ENCODE measurements at regions of chr3 and their contacts with region 1.

Region 1: DNA sequence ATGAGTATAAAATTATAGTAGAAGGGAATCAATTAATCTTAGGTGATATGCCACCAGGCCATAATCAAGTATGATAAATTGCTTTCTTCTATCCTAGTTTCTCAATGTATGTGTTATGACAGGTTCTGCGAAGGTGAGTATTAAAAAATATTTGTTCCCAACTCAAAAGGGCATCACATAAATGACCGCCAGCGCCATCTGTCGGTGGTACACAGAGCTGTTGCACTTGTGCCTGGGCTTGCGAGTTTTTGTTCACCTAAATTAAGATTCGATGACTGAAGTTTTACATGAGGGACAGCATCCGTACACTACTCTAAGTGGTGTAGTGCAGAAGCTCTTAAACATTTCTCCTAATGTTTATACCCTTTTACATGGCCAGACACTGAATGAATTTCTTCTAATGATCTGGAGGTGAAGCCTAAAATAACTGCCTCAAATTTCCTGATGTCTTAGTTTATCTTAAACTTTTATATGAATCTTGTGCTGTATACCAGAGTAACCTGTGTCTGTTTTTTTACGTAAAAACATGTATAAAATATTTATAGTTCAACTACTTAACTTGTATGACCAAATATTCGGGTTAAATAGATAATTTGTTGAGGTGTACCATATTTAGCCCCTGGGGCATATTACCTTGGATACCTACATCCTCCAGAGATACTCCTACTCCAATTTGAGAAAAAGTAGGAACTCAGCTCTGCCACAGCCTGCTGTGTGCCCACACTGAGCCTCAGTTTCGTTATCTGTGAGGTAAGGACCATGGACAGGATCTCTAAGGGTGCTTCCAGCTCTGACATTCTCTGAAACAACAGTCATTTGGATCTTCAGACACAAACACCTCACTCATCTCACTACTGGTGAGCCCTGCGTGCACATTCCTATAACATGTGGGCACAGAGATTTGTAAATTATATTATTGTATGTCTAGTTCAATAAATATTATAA is 365.6 kb downstream of the MAGI1 start:
- DNase-seq: peak; percentile 64
- ATAC-seq: peak in 1 of 2 donors; percentile 22

Region 2: GRCh38 chr3:64766440-64766839 is 906.7 kb before region 1 on chr3:
- intact Hi-C with region 1: no loop called
- DNase-seq: no peak
- ATAC-seq: no peak

Region 3: DNA sequence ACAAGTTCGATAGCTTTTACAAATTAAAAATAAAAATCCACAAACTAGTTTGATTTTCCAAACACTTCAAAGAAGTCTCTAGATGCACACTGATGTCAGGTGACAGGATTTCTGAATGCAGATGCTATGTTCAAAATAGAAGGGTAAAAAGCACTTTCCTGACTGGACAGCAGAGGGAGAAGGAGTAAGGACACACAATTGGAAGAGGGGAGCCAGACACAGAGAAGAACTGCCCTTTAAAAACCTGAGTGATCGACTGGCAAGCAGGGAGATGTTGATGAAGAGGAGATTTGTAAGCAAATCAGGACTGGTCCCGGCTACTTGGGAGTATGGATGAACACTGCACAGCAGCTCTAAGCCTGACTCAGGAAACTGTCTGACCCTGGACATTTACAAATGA is 247.3 kb before region 1 on chr3:
- intact Hi-C with region 1: loop called in 1 of 2 experiments (anchors 10 kb)
- DNase-seq: no peak
- ATAC-seq: peak; percentile 25 to 57

Region 4: DNA sequence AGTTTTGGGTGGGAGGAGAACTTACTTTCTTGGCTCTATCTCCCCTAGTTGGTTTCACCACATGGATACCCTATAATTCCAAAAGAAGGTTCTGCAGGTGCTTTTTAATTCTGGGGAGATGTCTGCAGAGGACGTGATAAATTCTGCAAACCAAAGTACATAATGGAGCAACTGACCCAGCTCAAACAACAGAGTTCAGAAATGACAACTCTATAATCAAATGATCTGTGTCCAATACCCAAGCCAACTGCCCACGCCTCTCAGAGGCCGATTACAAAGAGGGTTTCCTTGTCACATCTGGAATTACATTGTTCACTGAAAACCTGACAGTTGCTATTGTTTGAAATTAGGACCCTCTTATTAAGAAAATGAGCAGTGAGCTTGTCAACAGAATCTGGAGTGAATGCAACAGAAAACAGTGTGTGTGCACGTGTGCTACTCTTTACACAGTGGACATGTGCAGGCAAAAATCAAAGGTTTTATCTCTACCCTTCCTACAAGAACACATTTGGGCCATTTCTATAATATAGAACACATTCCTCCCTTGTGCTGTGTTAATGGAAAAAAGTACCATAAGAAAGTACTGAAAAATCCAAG is 227.5 kb before region 1 on chr3:
- intact Hi-C with region 1: no loop called
- DNase-seq: no peak
- ATAC-seq: no peak

Region 5: DNA sequence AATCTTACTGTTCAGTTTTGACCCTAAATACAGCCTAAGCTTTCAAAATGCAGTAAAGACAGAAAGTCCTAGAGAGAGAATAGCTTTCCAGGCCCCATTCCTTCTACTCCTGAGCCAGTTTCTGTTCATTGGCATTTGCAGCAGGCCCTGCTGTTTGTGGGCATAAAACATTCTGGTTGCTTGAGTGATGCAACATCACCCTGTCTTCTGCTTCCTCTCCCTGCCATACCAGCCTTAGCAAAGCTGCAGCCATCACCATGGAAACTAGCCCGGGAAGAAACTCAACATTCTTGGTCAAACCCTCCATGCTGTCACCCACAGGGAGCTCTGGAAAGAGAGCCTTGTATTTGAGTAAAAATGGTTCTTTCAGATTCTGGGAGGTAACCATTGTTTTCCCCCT is 39.9 kb after region 1 on chr3:
- intact Hi-C with region 1: no loop called
- DNase-seq: no peak
- ATAC-seq: peak; percentile 44

Region 6: GRCh38 chr3:66066963-66067629 is 394.0 kb after region 1 on chr3:
- intact Hi-C with region 1: no loop called
- DNase-seq: no peak
- ATAC-seq: no peak

Measured in left cardiac atrium (tissue), 4 donors.